ENCODE measurements at regions of chr15 and their contacts with region 1.

Region 1: GRCh38 chr15:64825431-64826294 is at the start of gene PIF1:
- DNase-seq: peak; percentile 88 to 96 (median 92)
- H3K4me3 ChIP-seq: peak within 1 kb of the TSS; percentile 60 to 62
- H3K4me3 Mint-ChIP-seq: peak within 1 kb of the TSS; percentile 84 to 94 (median 88)
- H3K27ac ChIP-seq: peak within 1 kb of the TSS; percentile 18
- H3K27ac Mint-ChIP-seq: peak within 1 kb of the TSS; percentile 55 to 90 (median 81)
- H3K4me1 ChIP-seq: peaks cover 23% of the 10 kb centered on the region
- H3K4me1 Mint-ChIP-seq: peaks cover 22 to 34% (median 29%) of the 10 kb centered on the region in 4 donors
- H3K27me3 ChIP-seq: no peaks in the 10 kb centered on the region
- H3K27me3 Mint-ChIP-seq: peaks cover 2 to 8% of the 10 kb centered on the region in 2 donors
- total RNA-seq, gene PIF1: 0.17 to 0.58 TPM

Region 2: DNA sequence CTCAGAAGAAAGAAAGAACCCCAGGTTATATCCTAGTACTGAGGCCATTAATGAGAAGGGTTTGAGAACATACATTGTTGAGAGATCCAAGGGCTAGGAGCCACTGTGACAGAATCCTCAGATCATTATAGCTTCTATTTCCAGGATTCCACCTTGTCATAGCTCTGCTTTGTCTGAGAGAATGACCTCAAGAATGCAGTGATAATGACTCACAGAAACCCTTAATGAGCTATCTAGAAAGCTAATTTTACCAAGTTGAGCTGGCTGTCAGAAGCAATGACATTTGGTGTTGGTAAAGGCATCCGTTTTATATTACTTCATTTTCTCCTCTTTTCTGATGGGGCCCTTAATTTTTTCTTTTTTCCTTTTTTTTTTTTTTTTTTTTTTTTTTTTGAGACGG is 427.1 kb before region 1 on chr15:
- CTCF ChIA-PET with region 1: no interaction called
- POLR2A ChIA-PET with region 1: no interaction called
- intact Hi-C with region 1: no loop called
- DNase-seq: no peak
- H3K4me3 ChIP-seq: no peak overlapping the region
- H3K4me3 Mint-ChIP-seq: no peak overlapping the region
- H3K27ac ChIP-seq: no peak overlapping the region
- H3K27ac Mint-ChIP-seq: no peak overlapping the region
- H3K4me1 ChIP-seq: no peaks in the 10 kb centered on the region
- H3K4me1 Mint-ChIP-seq: peaks cover 0 to 2% (median under 1%) of the 10 kb centered on the region in 4 donors
- H3K27me3 ChIP-seq: no peaks in the 10 kb centered on the region
- H3K27me3 Mint-ChIP-seq: no peaks in the 10 kb centered on the region

Region 3: GRCh38 chr15:64702816-64703646 is 122.6 kb before region 1 on chr15:
- CTCF ChIA-PET with region 1: no interaction called
- POLR2A ChIA-PET with region 1: no interaction called
- intact Hi-C with region 1: no loop called
- DNase-seq: peak; percentile 91 to 94 (median 91)
- H3K4me3 ChIP-seq: peak overlapping the region; percentile 54 to 84
- H3K4me3 Mint-ChIP-seq: peak overlapping the region; percentile 79 to 95 (median 92)
- H3K27ac ChIP-seq: peak overlapping the region; percentile 73
- H3K27ac Mint-ChIP-seq: peak overlapping the region; percentile 44 to 95 (median 92)
- H3K4me1 ChIP-seq: peaks cover 52% of the 10 kb centered on the region
- H3K4me1 Mint-ChIP-seq: peaks cover 45 to 59% (median 52%) of the 10 kb centered on the region in 4 donors
- H3K27me3 ChIP-seq: no peaks in the 10 kb centered on the region
- H3K27me3 Mint-ChIP-seq: no peaks in the 10 kb centered on the region

Region 4: DNA sequence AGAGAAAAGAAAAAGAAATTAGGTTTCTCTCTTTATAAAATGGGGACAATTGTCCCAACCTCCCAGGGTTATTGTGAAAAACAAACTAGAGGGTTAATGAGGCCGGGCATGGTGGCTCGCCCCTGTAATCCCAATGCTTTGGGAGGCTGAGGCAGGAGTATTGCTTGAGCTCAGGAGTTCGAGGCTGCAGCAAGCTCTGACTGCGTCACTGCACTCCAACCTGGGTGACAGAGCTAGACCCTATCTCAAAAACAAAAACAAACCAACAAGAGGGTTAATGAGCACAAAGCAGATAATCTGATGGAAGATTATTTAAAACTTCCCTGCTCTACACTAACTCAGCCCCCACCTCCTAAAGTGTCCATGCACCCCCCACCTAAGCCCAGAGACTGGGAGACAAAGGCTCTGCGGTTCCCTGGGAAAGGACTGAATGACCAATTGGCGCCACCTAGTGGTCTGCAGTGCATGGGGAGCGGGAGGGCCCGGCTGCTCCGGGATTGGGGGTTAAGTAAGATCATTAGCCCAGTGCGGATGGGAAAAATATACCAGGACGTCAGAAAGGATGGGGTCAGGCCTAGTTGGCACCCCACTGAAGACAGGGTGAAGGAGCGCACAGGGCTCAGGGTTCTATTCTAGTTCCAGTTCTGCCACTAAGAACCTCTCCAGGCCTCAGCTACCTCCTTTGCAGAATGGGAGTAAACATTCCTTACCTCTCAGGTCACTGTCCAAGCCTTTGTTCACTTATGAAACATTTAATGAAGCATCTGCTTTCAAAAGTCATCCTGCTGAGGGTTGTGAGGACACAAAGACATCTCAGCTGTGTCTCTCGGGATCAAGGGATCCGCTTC is 15.8 kb before region 1 on chr15:
- CTCF ChIA-PET with region 1: interaction called, 24 read pairs
- POLR2A ChIA-PET with region 1: no interaction called
- intact Hi-C with region 1: no loop called
- DNase-seq: peak; percentile 42 to 58 (median 54)
- H3K4me3 ChIP-seq: no peak overlapping the region
- H3K4me3 Mint-ChIP-seq: no peak overlapping the region
- H3K27ac ChIP-seq: no peak overlapping the region
- H3K27ac Mint-ChIP-seq: peak overlapping the region in 3 of 7 donors; percentile 18 to 68 (median 43)
- H3K4me1 ChIP-seq: peaks cover 5% of the 10 kb centered on the region
- H3K4me1 Mint-ChIP-seq: peaks cover 0 to 5% (median 2%) of the 10 kb centered on the region in 4 donors
- H3K27me3 ChIP-seq: no peaks in the 10 kb centered on the region
- H3K27me3 Mint-ChIP-seq: no peaks in the 10 kb centered on the region

Region 5: GRCh38 chr15:64836023-64836536 is 10.4 kb after region 1 on chr15:
- CTCF ChIA-PET with region 1: interaction called, 34 read pairs
- POLR2A ChIA-PET with region 1: interaction called, 19 read pairs
- intact Hi-C with region 1: loop called (anchors 1 kb)
- DNase-seq: no peak
- H3K4me3 ChIP-seq: peak overlapping the region in 1 of 2 donors; percentile 23
- H3K4me3 Mint-ChIP-seq: peak overlapping the region; percentile 49 to 79 (median 65)
- H3K27ac ChIP-seq: no peak overlapping the region
- H3K27ac Mint-ChIP-seq: peak overlapping the region; percentile 40 to 88 (median 80)
- H3K4me1 ChIP-seq: peaks cover 60% of the 10 kb centered on the region
- H3K4me1 Mint-ChIP-seq: peaks cover 37 to 54% (median 44%) of the 10 kb centered on the region in 4 donors
- H3K27me3 ChIP-seq: no peaks in the 10 kb centered on the region
- H3K27me3 Mint-ChIP-seq: no peaks in the 10 kb centered on the region

Region 6: DNA sequence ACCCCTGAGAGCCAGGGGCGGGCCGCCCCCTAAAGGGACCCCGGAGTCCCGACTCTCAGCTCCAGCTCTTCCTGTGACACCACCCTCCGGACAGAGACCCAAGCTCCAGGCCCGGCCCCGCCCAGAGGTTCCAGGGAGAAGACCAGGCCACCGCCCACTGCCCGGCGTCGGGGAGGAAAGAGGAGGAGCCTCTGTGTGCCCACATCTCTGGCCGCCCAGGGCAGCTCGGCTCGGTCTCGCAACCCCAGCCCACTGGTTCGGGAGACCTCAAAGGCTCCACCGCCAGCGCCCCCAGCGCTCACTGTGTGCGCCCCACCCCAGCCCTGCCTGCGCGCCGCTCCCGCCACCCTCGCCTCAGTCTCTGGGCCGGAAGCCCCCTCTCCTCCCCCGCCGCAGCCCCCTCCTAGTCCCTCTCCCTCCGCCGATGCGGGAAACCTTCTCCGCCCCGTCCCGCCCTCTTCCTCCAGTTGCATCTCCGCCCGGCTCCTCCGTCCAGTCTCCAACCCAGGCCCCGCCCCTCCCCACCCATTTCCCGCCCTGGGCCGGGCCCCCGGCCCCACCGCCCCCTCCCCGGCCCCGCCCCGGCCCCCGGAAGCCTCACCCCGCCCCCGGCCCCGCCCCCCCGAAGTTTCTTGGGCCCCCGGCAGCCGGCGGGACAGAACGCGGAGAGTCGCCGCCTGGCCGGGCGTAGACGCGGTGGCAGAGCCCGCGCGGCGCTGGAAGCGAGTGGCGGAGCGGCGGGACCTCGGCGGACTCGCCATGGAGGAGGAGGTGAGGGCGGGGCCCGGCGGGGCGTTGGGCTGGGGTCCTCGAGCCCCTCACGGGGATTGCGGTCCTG is 15.8 kb after region 1 on chr15 and contains the start of gene PLEKHO2:
- CTCF ChIA-PET with region 1: interaction called, 34 read pairs
- POLR2A ChIA-PET with region 1: interaction called, 8 read pairs
- intact Hi-C with region 1: loop called (anchors 2 kb)
- DNase-seq: peak; percentile 83 to 95 (median 87)
- H3K4me3 ChIP-seq: peak within 1 kb of the TSS; percentile 81 to 88
- H3K4me3 Mint-ChIP-seq: peak within 1 kb of the TSS; percentile 85 to 99 (median 98)
- H3K27ac ChIP-seq: peak within 1 kb of the TSS; percentile 84
- H3K27ac Mint-ChIP-seq: peak within 1 kb of the TSS; percentile 78 to 99 (median 97)
- H3K4me1 ChIP-seq: peaks cover 90% of the 10 kb centered on the region
- H3K4me1 Mint-ChIP-seq: peaks cover 55 to 86% (median 70%) of the 10 kb centered on the region in 4 donors
- H3K27me3 ChIP-seq: no peaks in the 10 kb centered on the region
- H3K27me3 Mint-ChIP-seq: no peaks in the 10 kb centered on the region
- total RNA-seq, gene PLEKHO2: 22.7 to 24.1 TPM

Region 7: GRCh38 chr15:65655026-65655425 is 829.4 kb after region 1 on chr15:
- CTCF ChIA-PET with region 1: no interaction called
- POLR2A ChIA-PET with region 1: no interaction called
- intact Hi-C with region 1: no loop called
- DNase-seq: no peak
- H3K4me3 ChIP-seq: no peak overlapping the region
- H3K4me3 Mint-ChIP-seq: no peak overlapping the region
- H3K27ac ChIP-seq: no peak overlapping the region
- H3K27ac Mint-ChIP-seq: peak overlapping the region in 3 of 7 donors; percentile 11 to 22 (median 18)
- H3K4me1 ChIP-seq: no peaks in the 10 kb centered on the region
- H3K4me1 Mint-ChIP-seq: peaks cover 4 to 10% (median 6%) of the 10 kb centered on the region in 4 donors
- H3K27me3 ChIP-seq: no peaks in the 10 kb centered on the region
- H3K27me3 Mint-ChIP-seq: no peaks in the 10 kb centered on the region